ENCODE measurements at regions of chr20 and their contacts with region 1.

Region 1: DNA sequence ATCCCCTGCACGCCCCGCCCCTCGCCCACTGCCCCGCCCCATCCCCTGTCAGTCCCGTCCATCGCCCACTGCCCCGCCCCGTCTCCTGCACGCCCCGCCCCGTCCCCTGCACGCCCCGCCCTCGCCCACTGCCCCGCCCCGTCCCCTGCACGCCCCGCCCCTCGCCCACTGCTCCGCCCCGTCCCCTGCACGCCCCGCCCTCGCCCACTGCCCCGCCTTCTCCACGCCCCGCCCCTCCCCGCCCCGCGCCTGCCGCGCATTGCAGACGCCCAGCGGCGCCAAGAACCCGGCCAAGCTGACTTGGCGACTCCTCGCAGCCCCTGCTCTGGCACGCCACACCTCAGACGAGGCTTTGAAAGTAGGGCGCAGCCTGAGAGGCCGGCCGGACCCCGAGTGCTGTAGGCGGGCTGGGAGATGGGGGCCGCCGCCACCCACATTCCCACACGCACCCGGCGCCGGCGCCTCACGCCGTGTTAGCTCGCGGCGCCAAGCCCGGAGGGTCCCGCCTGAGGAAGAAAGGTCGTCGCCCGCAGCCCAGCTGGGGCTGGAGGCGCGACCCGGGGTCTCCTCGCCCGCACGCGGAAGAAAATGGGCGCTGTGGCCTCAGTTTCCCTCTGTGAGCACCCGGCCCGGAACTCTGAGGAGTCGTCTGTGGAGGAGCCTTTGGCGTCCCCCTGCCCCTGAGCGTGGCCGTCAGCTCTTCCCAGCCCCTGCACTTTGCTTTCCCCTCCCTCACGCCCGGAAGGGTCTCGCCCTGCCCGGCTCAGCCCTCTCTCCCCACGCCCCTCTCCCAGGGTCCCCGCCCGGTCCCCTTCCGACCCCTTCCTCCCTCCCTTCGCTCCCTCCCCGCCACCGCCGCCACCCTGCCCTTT is at the start of gene RAD21L1:
- DNase-seq: peak; percentile 88
- H3K4me3 Mint-ChIP-seq: peak within 1 kb of the TSS; percentile 86
- H3K27ac Mint-ChIP-seq: peak within 1 kb of the TSS; percentile 11
- H3K4me1 Mint-ChIP-seq: peaks cover 16% of the 10 kb centered on the region
- H3K27me3 Mint-ChIP-seq: peaks cover 50% of the 10 kb centered on the region
- total RNA-seq, gene RAD21L1: not detected in 2 replicates

Region 2: GRCh38 chr20:1185790-1186334 is 40.2 kb before region 1 on chr20:
- intact Hi-C with region 1: no loop called
- DNase-seq: peak; percentile 87
- H3K4me3 Mint-ChIP-seq: peak overlapping the region; percentile 78
- H3K27ac Mint-ChIP-seq: no peak overlapping the region
- H3K4me1 Mint-ChIP-seq: peaks cover 10% of the 10 kb centered on the region
- H3K27me3 Mint-ChIP-seq: peaks cover 47% of the 10 kb centered on the region

Region 3: DNA sequence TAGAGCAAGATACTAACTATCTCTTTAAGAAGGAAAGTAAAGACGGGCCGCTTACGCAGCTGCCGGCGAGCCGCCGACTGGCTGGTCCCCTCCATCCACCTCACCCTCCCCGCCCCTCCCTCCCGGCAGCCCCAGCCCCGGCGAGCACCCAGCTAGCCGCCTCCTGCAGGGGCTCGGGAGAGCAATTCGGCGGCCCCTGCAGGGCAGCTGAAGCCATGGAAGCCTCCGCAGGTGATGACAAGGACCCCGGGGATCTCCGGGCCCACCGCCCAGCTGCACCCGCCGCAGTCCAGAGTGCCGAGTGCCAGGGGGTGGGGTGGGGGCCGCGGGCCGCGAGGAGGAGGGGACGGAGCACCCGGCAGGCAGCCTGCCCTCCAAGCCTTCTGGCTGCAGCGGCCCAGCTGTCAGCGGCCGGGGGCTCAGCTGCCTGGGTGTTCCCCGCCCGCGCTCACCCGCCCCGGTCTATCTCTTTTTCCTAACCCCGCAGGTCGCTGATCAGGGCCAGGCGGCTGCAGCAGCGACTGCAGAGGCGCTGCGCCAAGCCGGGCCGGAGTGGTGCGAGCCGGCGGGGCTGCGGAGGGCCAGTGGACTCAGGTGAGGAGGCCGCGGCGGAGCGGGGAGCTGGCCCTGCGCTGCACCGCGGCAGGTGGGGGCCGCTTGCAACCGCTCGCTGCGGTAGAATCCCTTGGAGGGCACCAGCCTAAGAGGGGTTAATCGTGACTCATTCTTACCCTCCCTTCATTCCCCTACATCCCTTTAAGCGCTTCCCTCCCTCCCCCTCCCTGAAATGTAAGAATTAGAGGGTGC is 40.4 kb after region 1 on chr20 and contains the start of gene SNPH:
- intact Hi-C with region 1: loop called (anchors 2 kb)
- DNase-seq: peak; percentile 90
- H3K4me3 Mint-ChIP-seq: peak within 1 kb of the TSS; percentile 83
- H3K27ac Mint-ChIP-seq: peak within 1 kb of the TSS; percentile 67
- H3K4me1 Mint-ChIP-seq: peaks cover 28% of the 10 kb centered on the region
- H3K27me3 Mint-ChIP-seq: peaks cover 3% of the 10 kb centered on the region
- total RNA-seq, gene SNPH: 1.7 and 1.8 TPM in 2 replicates

Region 4: DNA sequence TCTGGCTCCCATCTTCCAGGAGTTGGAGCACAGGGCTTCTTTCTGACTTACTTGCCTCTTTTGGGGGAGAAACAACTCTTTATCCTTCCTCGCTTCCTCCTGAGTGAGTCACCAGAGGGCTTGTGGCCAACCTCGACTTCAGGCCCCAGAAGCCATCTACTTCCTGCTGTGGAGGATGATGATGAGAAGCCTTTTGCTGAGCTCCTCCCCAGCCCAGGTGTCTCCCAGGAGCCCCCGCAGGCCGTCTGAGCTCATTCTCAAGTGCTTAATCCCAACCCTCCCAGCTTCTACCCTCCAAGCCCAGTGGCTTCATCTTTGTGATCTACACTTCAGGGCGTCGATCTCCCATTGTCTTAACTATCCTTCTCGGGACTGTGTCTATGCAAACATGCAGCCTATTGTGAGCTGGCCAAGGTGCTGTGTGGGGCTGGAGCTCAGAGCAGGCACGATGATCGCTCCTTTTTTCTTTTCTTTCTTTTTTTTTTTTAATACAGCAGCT is 75.1 kb after region 1 on chr20:
- intact Hi-C with region 1: loop called (anchors 5 kb)
- DNase-seq: peak; percentile 88
- H3K4me3 Mint-ChIP-seq: peak overlapping the region; percentile 80
- H3K27ac Mint-ChIP-seq: peak overlapping the region; percentile 90
- H3K4me1 Mint-ChIP-seq: peaks cover 20% of the 10 kb centered on the region
- H3K27me3 Mint-ChIP-seq: no peaks in the 10 kb centered on the region

Measured in activated CD4-positive, alpha-beta T cell treated with anti-CD3 and anti-CD28 coated beads, Interleukin-2, amount 10 ng/mL, durations not matched to agents 24 days and 14 days (primary cell).